ENCODE measurements at regions of chr9 and their contacts with region 1.

Region 1: GRCh38 chr9:95103385-95103784 is 214.1 kb downstream of the FANCC start:
- DNase-seq: no peak
- H3K4me3 ChIP-seq: no peak overlapping the region
- H3K27ac ChIP-seq: no peak overlapping the region
- H3K4me1 ChIP-seq: peaks cover 0 to 8% (median 2%) of the 10 kb centered on the region in 4 experiments; a peak in 5 of 7 replicates
- H3K27me3 ChIP-seq: no peaks in the 10 kb centered on the region
- CTCF ChIP-seq: peak; percentile 35 to 91 (median 61)
- EP300 ChIP-seq: no peak
- POLR2A ChIP-seq: no peak
- RAD21 ChIP-seq: peak; percentile 39 to 54; a peak in 3 of 4 replicates

Region 2: GRCh38 chr9:94681508-94681907 is 421.9 kb before region 1 on chr9:
- CTCF ChIA-PET with region 1: interaction called, 13 read pairs
- POLR2A ChIA-PET with region 1: no interaction called
- DNase-seq: peak; percentile 19 to 63
- H3K4me3 ChIP-seq: no peak overlapping the region
- H3K27ac ChIP-seq: no peak overlapping the region
- H3K4me1 ChIP-seq: no peaks in the 10 kb centered on the region; a peak in 1 of 7 replicates
- H3K27me3 ChIP-seq: no peaks in the 10 kb centered on the region; a peak in 1 of 7 replicates
- CTCF ChIP-seq: peak; percentile 25 to 74 (median 66)
- EP300 ChIP-seq: no peak
- POLR2A ChIP-seq: no peak
- RAD21 ChIP-seq: peak; percentile 82 to 88

Region 3: GRCh38 chr9:94783102-94783664 is 320.2 kb before region 1 on chr9:
- CTCF ChIA-PET with region 1: interaction called, 15 read pairs
- POLR2A ChIA-PET with region 1: no interaction called
- DNase-seq: peak; percentile 13 to 63
- H3K4me3 ChIP-seq: no peak overlapping the region
- H3K27ac ChIP-seq: no peak overlapping the region
- H3K4me1 ChIP-seq: peaks cover 0 to 6% (median 0%) of the 10 kb centered on the region in 4 experiments; a peak in 3 of 7 replicates
- H3K27me3 ChIP-seq: no peaks in the 10 kb centered on the region
- CTCF ChIP-seq: peak in 2 of 3 experiments; percentile 80 to 85; a peak in 3 of 4 replicates
- EP300 ChIP-seq: no peak
- POLR2A ChIP-seq: no peak
- RAD21 ChIP-seq: peak; percentile 92 to 96

Region 4: DNA sequence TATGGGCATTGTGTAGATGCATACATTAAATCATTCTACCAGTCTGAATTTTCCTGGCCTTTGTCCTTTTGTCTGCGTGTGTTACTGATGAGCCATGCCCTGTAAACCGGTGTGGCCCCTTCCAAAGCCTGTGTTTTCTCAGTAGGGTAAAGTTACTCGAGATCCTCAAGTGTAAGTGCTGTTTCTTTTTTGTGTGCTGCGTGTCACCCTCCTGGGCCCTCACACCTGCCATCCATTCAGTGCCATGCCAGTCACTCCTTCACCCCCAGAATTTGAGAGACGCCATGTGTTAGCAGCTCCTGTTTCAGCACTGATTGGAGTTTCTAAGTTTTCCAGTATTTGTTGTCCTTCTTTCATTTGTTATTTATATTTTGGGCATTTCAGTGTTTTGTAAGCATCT is 74.1 kb before region 1 on chr9:
- CTCF ChIA-PET with region 1: no interaction called
- POLR2A ChIA-PET with region 1: no interaction called
- DNase-seq: no peak
- H3K4me3 ChIP-seq: no peak overlapping the region
- H3K27ac ChIP-seq: no peak overlapping the region
- H3K4me1 ChIP-seq: no peaks in the 10 kb centered on the region; a peak in 2 of 7 replicates
- H3K27me3 ChIP-seq: no peaks in the 10 kb centered on the region
- CTCF ChIP-seq: no peak
- EP300 ChIP-seq: no peak
- POLR2A ChIP-seq: no peak
- RAD21 ChIP-seq: no peak

Region 5: GRCh38 chr9:95048225-95049087 is 54.9 kb before region 1 on chr9:
- CTCF ChIA-PET with region 1: no interaction called
- POLR2A ChIA-PET with region 1: no interaction called
- DNase-seq: peak in 1 of 2 experiments; percentile 72
- H3K4me3 ChIP-seq: peak overlapping the region; percentile 55 to 75 (median 66)
- H3K27ac ChIP-seq: no peak overlapping the region
- H3K4me1 ChIP-seq: peaks cover 6 to 20% (median 12%) of the 10 kb centered on the region in 4 experiments
- H3K27me3 ChIP-seq: peaks cover 0 to 20% (median 9%) of the 10 kb centered on the region in 4 experiments; a peak in 6 of 7 replicates
- CTCF ChIP-seq: no peak
- EP300 ChIP-seq: no peak
- POLR2A ChIP-seq: no peak
- RAD21 ChIP-seq: no peak

Region 6: DNA sequence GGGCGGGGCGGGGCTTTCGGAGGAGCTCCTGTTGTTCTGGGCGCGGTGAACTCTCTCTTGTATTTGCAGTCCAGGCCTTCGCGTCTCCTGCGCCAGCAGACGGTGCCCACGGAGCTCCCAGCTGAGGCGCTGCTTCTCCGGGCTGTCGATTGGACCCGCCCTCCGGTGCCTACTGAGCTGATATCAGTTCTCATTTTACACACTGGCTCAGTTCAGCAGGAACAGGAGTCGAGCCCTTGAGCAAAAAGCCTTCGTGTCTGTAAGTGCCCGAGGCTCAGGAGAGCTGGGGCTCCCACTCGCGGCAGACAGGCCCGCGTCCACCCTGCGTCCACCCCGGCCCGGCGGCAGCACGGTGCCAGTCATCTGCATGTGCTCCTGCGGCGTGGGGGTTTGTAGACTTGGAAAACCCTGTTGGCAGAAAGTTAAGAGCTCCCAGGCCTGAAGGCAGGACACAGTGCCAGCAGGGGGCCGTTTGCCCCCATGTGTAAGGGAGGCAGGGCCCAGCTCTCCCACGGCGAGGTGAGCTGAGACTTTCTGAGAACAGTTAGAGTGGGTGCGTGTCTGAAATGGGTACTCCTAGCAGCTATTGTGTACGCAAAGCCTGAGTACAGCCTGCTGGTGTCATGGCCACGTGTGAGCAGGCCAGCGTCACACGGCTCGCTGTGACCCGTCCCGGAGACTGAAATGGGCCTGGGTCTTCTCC is 17.4 kb before region 1 on chr9:
- CTCF ChIA-PET with region 1: interaction called, 20 read pairs
- POLR2A ChIA-PET with region 1: no interaction called
- DNase-seq: no peak
- H3K4me3 ChIP-seq: no peak overlapping the region
- H3K27ac ChIP-seq: no peak overlapping the region
- H3K4me1 ChIP-seq: peaks cover 0 to 2% (median 0%) of the 10 kb centered on the region in 4 experiments; a peak in 1 of 7 replicates
- H3K27me3 ChIP-seq: no peaks in the 10 kb centered on the region
- CTCF ChIP-seq: no peak
- EP300 ChIP-seq: no peak
- POLR2A ChIP-seq: no peak
- RAD21 ChIP-seq: no peak

Region 7: DNA sequence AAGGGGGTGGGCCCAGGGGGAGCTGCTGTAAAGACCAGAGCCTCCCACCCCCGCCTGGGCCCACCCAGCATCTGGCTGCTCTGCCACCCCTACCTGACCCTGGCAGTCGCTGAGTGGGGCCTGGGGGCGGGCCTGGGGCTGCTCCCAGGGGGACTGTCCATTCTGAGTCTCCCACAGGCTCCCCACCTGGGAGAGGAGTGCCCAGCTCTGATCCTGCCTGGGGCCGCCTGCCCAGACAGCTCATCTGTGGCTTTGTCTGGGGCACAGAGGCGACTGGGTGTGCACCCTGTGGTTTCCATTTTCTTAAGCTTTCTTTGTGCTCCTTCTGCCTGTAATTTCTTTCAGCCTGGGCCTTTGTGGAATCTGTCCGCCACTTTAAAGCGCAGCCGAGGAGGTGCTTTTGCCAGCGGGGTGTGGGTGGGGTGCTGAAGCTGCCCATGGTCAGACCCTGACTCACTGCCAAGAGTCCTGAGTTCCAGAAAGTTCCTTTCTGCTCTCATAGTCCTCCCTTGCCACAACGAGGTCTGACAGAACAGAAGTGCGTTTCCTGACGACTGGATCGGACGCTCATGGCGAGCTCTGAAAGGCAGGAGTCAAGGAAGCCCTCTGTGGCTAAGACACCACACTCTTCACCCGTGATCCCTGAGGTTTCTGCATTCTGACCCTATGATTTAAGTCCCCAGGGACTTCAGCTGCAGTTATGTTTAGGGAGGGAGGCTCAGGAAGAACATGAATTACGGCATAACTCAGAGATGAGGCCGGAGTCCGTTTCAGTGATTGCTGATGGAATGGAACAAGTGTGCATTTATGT is 10.9 kb before region 1 on chr9:
- CTCF ChIA-PET with region 1: interaction called, 26 read pairs
- POLR2A ChIA-PET with region 1: no interaction called
- DNase-seq: no peak
- H3K4me3 ChIP-seq: no peak overlapping the region
- H3K27ac ChIP-seq: no peak overlapping the region
- H3K4me1 ChIP-seq: peaks cover 0 to 12% (median 7%) of the 10 kb centered on the region in 4 experiments
- H3K27me3 ChIP-seq: no peaks in the 10 kb centered on the region
- CTCF ChIP-seq: no peak
- EP300 ChIP-seq: no peak
- POLR2A ChIP-seq: no peak
- RAD21 ChIP-seq: no peak

Region 8: GRCh38 chr9:95116003-95116807 is 12.8 kb after region 1 on chr9:
- CTCF ChIA-PET with region 1: interaction called, 209 read pairs
- POLR2A ChIA-PET with region 1: no interaction called
- DNase-seq: no peak
- H3K4me3 ChIP-seq: no peak overlapping the region
- H3K27ac ChIP-seq: no peak overlapping the region
- H3K4me1 ChIP-seq: no peaks in the 10 kb centered on the region
- H3K27me3 ChIP-seq: no peaks in the 10 kb centered on the region
- CTCF ChIP-seq: peak; percentile 30 to 77 (median 67)
- EP300 ChIP-seq: no peak
- POLR2A ChIP-seq: no peak
- RAD21 ChIP-seq: peak; percentile 75 to 78

Region 9: DNA sequence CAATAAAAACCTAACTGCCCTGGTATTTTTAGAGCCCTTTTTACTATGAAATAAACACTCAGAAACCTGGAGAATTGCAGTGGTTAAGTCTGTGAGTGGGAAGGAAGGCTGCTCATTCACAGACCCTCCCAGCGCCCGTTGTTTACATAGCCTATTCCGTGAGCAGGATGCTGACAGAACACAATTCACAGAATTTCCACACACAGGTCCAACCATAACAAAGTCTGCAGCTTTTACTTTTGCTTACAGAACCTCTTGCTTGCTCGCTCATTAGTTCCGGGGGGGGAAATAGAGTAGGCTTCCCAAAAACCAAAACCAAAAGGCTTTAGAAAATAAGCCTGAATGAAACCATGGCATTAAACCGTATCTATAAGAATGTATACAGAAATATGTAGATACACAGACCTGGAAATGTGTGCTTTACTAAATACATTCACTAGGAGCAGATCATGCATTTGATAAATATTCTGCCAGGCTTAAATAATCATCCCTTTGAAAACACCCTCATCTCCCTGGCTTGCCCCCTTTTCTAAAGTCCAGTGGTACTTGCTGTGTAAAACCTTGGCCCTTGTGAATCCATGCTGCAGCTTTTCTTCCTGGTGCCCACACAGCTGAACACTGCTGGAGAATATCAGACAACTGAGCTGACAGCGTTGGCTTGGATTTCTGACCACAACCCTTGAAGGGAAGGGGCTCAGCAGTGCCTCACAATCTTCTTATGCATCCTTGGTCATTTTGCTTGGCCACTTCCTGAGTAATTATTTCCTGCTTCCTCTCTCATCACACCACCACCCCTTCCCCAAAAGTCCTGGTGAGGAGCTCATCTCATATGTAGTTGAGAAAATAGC is 86.1 kb after region 1 on chr9:
- CTCF ChIA-PET with region 1: no interaction called
- POLR2A ChIA-PET with region 1: no interaction called
- DNase-seq: no peak
- H3K4me3 ChIP-seq: no peak overlapping the region
- H3K27ac ChIP-seq: no peak overlapping the region
- H3K4me1 ChIP-seq: no peaks in the 10 kb centered on the region; a peak in 1 of 7 replicates
- H3K27me3 ChIP-seq: no peaks in the 10 kb centered on the region
- CTCF ChIP-seq: no peak
- EP300 ChIP-seq: no peak
- POLR2A ChIP-seq: no peak
- RAD21 ChIP-seq: no peak

Measured in H1 (cell line).